PC-9 (cell line): ENCODE measurements at regions of chr2 and their contacts with region 1.

Region 1: DNA sequence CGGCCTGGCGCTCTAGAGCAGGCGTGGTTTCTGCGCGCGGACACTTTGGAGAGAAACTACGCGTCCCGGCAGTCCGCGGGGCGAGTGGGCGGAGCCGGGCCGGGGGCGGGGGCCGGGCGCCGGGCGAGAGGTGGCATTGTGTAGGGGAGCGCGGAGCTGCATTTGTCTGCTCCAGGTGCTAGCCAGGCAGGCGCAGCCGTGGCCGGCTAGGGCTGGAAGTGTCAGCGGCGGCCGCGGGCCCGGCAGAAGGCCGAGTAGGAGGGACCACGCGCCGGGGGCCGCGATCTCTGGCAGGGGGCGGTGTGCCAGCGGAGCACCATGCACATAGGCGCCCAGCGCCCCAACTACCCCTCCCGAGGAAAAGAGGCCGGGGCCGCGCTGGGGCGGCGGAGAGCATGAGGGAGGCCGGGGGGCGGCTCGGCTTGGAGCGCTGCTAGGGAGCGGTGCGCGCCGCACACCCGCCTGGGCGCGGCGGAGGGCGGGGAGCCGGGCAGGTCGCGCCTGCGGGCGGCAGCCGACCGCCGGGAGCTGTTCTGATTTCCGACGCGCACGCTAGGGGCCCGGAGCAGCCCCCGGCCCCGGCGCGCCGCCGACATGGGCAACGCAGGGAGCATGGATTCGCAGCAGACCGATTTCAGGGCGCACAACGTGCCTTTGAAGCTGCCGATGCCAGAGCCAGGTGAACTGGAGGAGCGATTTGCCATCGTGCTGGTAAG is at the start of gene FMNL2:
- DNase-seq: peak; percentile 69 to 88
- H3K4me3 ChIP-seq: peak within 1 kb of the TSS; percentile 94
- H3K27ac ChIP-seq: peak within 1 kb of the TSS; percentile 35
- H3K4me1 ChIP-seq: peaks cover 29% of the 10 kb centered on the region
- H3K27me3 ChIP-seq: no peaks in the 10 kb centered on the region
- CTCF ChIP-seq: no peak; the same call in 1 of the 2 replicates
- total RNA-seq, gene FMNL2: 29.0 and 33.6 TPM in 2 replicates

Region 2: GRCh38 chr2:152407204-152407721 is 72.1 kb after region 1 on chr2:
- CTCF ChIA-PET with region 1: no interaction called
- POLR2A ChIA-PET with region 1: no interaction called
- intact Hi-C with region 1: loop called (anchors 5 kb)
- DNase-seq: peak in 1 of 2 experiments; percentile 45
- H3K4me3 ChIP-seq: no peak overlapping the region
- H3K27ac ChIP-seq: no peak overlapping the region
- H3K4me1 ChIP-seq: peaks cover 73% of the 10 kb centered on the region
- H3K27me3 ChIP-seq: no peaks in the 10 kb centered on the region
- CTCF ChIP-seq: no peak

Region 3: GRCh38 chr2:152505495-152505906 is 170.3 kb after region 1 on chr2:
- CTCF ChIA-PET with region 1: no interaction called
- POLR2A ChIA-PET with region 1: interaction called, 8 read pairs
- intact Hi-C with region 1: loop called (anchors 2 kb)
- DNase-seq: peak in 1 of 2 experiments; percentile 55
- H3K4me3 ChIP-seq: no peak overlapping the region
- H3K27ac ChIP-seq: peak overlapping the region; percentile 65
- H3K4me1 ChIP-seq: peaks cover 51% of the 10 kb centered on the region
- H3K27me3 ChIP-seq: no peaks in the 10 kb centered on the region
- CTCF ChIP-seq: no peak

Region 4: DNA sequence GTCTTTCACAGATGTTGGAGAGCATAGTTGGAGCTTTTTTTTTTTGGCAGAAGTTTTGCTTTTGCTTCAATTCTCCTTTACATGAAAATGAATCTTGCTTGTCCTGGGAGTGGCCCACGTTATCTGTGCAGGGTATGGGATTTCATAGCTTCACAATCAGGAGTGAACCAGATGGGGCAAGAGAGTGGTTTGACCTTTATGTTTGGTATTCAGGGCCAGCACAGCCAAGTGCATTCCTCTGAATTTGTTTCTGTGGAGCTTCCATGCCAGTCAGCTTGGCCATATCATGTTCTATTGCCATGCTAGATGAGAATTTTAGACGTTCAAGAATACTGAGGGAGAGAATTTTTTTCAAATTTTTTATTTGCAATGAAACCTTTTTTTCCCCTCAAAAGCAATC is 265.5 kb after region 1 on chr2:
- CTCF ChIA-PET with region 1: no interaction called
- POLR2A ChIA-PET with region 1: interaction called, 12 read pairs
- intact Hi-C with region 1: no loop called
- DNase-seq: peak in 1 of 2 experiments; percentile 32
- H3K4me3 ChIP-seq: no peak overlapping the region
- H3K27ac ChIP-seq: no peak overlapping the region
- H3K4me1 ChIP-seq: no peaks in the 10 kb centered on the region
- H3K27me3 ChIP-seq: no peaks in the 10 kb centered on the region
- CTCF ChIP-seq: no peak

Region 5: GRCh38 chr2:152657043-152657442 is 321.9 kb after region 1 on chr2:
- CTCF ChIA-PET with region 1: no interaction called
- POLR2A ChIA-PET with region 1: no interaction called
- intact Hi-C with region 1: no loop called
- DNase-seq: no peak
- H3K4me3 ChIP-seq: no peak overlapping the region
- H3K27ac ChIP-seq: no peak overlapping the region
- H3K4me1 ChIP-seq: no peaks in the 10 kb centered on the region
- H3K27me3 ChIP-seq: no peaks in the 10 kb centered on the region
- CTCF ChIP-seq: no peak